A673 (cell line): ENCODE measurements at regions of chr20 and their contacts with region 1.

Region 1: DNA sequence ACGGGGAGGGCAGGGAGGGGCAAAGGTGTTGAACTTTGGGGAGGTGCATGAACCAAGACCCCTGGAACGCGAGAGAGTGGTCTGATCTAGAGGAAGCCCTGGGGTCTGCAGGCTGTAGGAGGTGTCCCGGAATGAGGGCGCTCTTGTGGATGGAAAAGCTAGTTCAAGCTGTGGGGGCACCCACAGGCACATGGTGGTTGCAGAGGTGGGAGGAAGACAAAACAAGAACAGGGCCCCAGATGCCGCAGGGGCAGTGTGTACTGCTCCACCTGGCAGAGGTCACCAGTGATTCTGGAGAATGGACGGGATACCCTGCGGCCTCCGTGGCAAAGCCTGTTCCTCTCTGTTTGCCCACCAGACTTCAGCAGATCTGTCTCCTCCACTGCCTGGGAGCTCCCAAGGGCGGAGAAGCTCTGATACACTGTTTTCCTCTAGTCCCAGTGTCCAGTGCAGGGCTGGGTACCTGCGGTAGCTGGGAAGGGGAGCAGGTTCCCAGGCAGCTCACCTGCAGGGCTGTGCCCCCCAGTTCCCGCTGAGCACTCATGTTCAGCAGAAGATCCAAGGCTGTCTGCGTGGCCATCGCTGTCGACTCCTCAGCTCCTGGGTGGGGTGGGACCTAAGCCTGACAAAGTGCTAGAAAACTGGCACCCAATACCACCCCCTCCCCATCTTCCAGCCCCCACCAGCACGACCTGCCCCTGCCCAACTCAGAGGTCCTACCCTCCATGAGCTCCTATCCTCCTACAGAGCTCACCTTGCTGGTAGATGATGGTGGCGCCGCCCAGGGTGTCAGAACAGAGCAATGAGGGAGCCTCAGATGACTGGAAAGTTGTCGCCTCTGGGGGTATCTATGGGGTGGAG is 14.7 kb downstream of the ZNF335 start:
- DNase-seq: no peak
- H3K4me3 ChIP-seq: no peak overlapping the region
- H3K27ac ChIP-seq: no peak overlapping the region
- H3K4me1 ChIP-seq: no peaks in the 10 kb centered on the region
- H3K27me3 ChIP-seq: no peaks in the 10 kb centered on the region
- CTCF ChIP-seq: no peak

Region 2: GRCh38 chr20:45945678-45946148 is 11.6 kb before region 1 on chr20:
- CTCF ChIA-PET with region 1: no interaction called
- POLR2A ChIA-PET with region 1: interaction called, 12 read pairs
- intact Hi-C with region 1: no loop called
- DNase-seq: peak; percentile 48
- H3K4me3 ChIP-seq: no peak overlapping the region
- H3K27ac ChIP-seq: no peak overlapping the region
- H3K4me1 ChIP-seq: no peaks in the 10 kb centered on the region
- H3K27me3 ChIP-seq: no peaks in the 10 kb centered on the region
- CTCF ChIP-seq: no peak